Mucosa of descending colon (tissue), 3 donors: ENCODE measurements at regions of chr5 and their contacts with region 1.

Region 1: DNA sequence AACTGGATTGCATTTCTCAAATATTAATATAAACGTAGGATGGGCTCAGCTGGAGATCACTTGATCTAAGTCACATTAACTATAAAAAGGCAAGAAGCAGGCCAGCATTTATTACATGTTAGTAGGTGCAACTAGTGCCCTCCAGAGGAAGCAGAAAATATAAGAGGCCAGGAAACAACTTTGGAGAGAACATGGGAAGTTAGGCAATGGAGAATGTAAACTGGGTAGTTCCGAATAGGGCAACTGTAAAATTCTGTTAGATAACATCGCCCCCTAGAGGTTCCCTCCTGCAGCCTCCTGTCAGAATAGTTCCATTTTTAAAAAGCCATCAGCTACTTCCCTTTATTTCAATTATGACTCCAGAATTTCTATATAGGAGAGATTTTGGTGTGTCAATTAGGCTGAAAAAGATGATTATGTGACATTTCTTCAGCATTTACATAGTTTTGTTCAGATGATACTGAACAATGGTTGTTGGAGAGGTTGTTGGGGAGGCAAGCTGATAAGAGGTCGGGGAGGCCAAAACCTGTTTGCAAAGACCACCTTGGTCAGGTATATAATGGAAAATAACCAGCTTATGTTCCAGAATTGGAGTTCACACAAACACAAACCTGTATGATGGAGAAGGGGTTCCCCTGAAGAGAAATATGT is 22.4 kb downstream of the CCL28 start:
- DNase-seq: peak in 1 of 3 donors; percentile 81
- ATAC-seq: peak; percentile 97
- H3K4me3 ChIP-seq: no peak overlapping the region
- H3K4me1 ChIP-seq: no peaks in the 10 kb centered on the region
- CTCF ChIP-seq: peak; percentile 64

Region 2: DNA sequence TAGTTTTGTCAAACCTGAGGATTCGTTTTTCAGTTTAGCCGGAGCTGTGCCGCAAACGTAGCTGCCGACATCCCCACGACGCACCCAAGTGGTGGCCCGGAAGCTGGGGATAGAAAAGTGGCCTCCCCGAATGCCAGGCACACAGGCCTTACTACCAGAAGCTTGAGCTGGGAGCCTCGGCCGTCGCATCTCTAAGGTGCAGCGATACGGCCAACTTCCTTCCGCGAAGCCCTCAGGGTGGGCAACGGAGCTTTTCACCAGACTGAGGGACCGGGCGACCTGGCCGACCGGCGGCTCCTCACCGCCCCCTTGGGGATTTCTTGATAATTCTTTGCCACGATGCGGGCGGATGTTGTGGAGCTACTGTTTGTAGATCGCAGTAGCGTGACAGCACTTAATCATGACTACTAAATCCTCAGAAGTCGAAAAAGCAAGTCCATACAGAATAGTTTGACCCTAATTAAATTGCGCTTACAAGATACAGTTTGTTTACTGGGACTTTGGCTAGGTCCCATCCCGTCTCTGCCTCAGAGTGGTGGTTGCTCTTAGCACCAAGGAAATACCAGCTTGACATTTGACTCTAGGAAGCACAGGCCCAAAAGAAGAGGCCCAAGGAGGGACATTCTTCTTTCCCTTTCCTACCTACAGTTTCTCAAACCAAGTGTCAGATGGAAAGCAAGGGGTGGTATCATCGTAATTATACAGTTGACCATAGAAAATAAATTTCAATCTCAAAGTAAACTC is 94.5 kb after region 1 on chr5:
- intact Hi-C with region 1: loop called in 1 of 2 experiments (anchors 10 kb)
- DNase-seq: peak; percentile 89 to 90 (median 89)
- ATAC-seq: peak; percentile 86
- H3K4me3 ChIP-seq: peak overlapping the region; percentile 46
- H3K4me1 ChIP-seq: peaks cover 22% of the 10 kb centered on the region
- CTCF ChIP-seq: peak; percentile 38